OCI-LY7 (cell line): ENCODE measurements at regions of chr14 and their contacts with region 1.

Region 1: DNA sequence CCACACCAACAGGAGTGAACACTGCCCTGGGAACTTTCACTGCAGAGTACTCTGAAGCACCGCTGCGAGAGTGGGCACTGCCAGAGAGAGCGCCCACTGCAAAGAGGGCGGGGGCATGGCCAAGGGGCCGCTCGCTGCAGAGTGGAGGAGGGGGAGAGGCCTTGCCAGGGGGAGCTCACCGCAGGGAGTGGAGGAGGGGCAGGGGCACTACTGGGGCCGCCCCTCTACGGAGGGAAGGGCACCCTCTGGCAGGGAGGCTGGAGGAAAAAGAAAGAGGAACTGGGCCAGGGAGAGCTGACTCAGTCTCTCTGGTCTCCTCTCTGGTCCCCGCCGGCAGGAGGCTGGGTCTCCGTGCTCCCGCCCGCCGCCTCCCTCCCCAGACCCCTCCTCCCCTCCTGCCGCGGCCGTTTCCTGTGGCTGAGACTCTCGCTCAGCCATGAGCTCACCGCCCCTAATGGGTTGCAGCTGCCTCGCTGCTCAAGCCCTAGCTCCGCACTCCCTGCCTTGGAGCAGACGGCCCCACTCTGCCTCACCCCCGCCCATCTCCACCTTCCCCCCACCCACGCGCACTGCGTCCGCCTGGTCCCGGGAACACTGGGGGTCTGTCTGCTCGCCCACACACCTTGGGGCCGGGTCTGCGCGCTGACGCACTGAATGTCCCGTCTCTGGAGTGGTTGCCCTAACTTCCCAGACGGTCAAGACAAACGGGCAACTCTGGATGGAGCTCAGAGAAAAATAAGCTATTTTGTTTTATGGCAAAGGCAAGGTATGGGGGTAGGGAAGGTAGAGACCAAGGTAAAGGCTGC is 1.3 kb downstream of the ARHGEF40 start:
- DNase-seq: peak; percentile 93
- H3K4me3 ChIP-seq: peak overlapping the region; percentile 68
- H3K27ac ChIP-seq: peak overlapping the region; percentile 28
- H3K4me1 ChIP-seq: peaks cover 41% of the 10 kb centered on the region
- CTCF ChIP-seq: no peak

Region 2: DNA sequence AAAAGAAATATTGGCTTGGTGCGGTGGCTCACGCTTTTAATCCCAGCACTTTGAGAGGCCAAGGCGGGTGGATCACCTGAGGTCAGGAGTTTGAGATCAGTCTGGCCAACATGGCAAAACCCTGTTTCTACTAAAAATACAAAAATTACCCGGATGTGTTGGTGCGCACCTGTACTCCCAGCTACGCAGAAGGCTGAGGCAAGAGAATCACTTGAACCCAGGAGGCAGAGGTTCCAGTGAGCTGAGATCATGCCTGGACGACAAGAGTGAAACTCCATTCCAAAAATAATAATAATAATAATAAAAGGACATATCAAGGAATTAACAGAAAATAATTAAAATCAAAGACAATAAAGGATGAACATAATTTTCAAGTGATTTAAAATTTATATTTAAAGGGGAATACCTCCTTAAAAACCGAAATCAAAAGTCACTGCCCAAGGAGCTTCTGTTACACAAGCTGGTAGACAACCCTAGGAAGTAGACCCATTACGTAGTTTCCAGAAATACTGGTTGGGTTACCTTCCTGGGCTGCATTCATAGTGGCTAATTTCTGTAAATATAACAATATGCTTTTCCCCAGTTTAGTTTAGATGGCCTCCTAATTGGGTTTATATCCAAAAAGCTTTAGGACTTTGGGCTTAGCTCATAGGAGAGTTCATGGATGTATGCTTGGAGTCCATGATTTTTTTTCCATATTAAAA is 328.0 kb before region 1 on chr14:
- CTCF ChIA-PET with region 1: no interaction called
- POLR2A ChIA-PET with region 1: no interaction called
- intact Hi-C with region 1: no loop called
- DNase-seq: no peak
- H3K4me3 ChIP-seq: no peak overlapping the region
- H3K27ac ChIP-seq: no peak overlapping the region
- H3K4me1 ChIP-seq: no peaks in the 10 kb centered on the region
- CTCF ChIP-seq: no peak

Region 3: DNA sequence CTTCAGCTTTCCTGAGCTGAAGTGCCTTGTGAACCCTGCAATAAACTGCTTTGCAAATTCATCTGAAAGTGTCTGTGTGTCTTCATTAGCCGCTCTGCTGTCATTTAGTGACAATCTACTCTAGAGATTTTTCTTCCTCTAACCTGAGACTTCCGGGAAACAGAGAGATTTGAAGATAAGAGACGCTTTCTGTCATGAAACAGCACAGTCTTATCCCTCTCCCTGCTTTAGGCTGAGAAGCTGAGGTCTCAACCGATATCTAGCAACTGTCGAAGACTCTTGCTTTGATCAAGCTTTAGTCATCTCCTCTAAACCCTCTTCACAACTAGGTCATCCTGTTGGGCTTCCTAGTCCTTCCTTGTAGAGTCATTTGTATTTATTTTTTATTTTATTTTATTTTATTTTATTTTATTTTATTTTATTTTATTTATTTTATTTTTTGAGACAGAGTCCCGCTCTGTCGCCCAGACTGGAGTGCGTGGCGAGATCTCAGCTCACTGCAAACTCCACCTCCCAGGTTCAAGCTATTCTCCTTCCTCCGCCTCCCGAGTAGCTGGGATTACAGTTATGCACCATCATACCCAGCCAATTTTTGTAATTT is 115.0 kb before region 1 on chr14:
- CTCF ChIA-PET with region 1: interaction called, 11 read pairs
- POLR2A ChIA-PET with region 1: no interaction called
- intact Hi-C with region 1: no loop called
- DNase-seq: no peak
- H3K4me3 ChIP-seq: no peak overlapping the region
- H3K27ac ChIP-seq: no peak overlapping the region
- H3K4me1 ChIP-seq: peaks cover 8% of the 10 kb centered on the region
- CTCF ChIP-seq: no peak

Region 4: DNA sequence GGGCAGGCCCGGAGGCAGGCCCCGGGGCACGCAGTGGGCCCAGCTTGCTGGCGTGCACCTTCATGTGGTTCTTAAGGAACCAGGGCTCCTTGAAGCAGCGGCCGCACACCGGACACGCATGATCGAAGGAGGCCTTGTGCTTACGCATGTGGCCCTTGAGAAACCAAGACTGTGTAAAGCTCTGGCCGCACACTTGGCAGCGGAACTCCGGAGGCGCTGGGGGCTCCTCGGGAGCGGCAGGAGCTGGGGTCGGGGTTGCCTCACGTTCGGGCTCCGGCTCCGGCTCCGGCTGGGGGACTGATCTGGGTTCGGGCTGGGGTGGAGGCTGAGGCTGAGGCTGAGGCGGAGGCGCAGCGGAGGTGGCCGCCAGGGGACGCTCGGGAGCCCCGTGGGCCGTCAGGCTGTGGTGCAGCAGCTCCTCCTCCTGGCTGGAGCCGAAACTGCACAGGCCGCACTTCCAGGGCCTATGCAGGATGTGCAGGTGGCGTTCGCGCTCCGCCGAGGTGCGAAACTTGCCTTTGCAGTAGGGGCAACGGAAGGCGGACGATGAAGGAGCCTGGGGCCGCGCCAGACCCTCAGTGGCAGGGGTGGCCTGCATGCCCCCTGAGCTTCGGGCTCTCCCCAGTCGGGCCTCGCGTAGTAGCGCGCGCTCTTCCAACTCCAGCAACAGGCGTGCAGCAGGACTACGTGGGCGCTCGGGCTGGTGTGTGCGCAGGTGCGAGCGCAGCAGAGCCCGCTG is 21.0 kb after region 1 on chr14:
- CTCF ChIA-PET with region 1: interaction called, 7 read pairs
- POLR2A ChIA-PET with region 1: interaction called, 7 read pairs
- intact Hi-C with region 1: loop called (anchors 1 kb)
- DNase-seq: peak; percentile 88
- H3K4me3 ChIP-seq: no peak overlapping the region
- H3K27ac ChIP-seq: no peak overlapping the region
- H3K4me1 ChIP-seq: peaks cover 20% of the 10 kb centered on the region
- CTCF ChIP-seq: peak; percentile 96

Region 5: DNA sequence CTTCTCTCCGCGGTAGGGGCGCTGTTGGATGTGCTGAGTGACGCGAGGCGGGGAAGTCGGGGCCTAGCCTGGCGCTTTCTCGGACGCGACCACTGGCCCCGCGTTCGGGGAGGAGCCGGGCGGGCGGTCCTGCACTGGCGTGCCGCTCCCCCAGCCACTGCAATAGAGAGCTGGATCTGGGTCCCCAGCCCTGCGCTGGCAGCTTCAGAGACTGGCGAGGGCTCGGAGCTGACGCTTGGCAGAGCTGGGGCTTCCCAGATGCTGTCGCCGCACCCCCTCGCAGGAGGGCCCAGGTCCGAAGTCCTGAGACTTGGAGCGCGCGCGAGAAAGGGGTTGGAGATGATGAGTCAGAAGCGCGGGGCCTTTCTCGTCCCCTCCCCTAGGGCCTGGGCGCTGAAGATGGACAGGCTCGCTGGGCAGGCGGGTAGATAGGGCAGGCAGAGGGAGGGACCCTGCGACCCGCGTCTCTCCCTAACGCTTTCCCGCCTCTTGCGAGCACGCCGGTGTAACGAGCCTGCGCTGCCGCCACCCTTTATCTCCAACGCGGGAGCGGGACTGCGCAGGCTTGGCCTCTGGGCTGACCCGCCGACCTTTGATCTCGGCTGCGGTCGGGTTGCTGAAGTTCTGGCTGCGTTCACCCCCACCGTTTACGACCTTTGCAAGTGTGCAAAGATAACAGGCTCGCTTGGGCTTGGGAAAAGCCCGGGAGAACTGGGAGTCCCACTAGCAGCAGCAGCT is 32.5 kb after region 1 on chr14:
- CTCF ChIA-PET with region 1: interaction called, 23 read pairs
- POLR2A ChIA-PET with region 1: interaction called, 31 read pairs
- intact Hi-C with region 1: loop called (anchors 1 kb)
- DNase-seq: peak; percentile 97
- H3K4me3 ChIP-seq: peak overlapping the region; percentile 85
- H3K27ac ChIP-seq: peak overlapping the region; percentile 59
- H3K4me1 ChIP-seq: peaks cover 45% of the 10 kb centered on the region
- CTCF ChIP-seq: 0 out of 2 replicates have a peak, but pooled peaks have one; percentile 76